Heart right ventricle (tissue), 16 donors: ENCODE measurements at regions of chr18 and their contacts with region 1.

Region 1: GRCh38 chr18:59470561-59471121 is 111.6 kb upstream of the LMAN1 start:
- DNase-seq: peak; percentile 58 to 71
- ATAC-seq: peak; percentile 61 to 90 (median 82)
- H3K4me3 ChIP-seq: no peak overlapping the region
- H3K27ac ChIP-seq: peak overlapping the region; percentile 29 to 87 (median 81)
- H3K4me1 ChIP-seq: peaks cover 0 to 30% (median 0%) of the 10 kb centered on the region in 9 donors
- H3K27me3 ChIP-seq: no peaks in the 10 kb centered on the region
- CTCF ChIP-seq: no peak

Region 2: DNA sequence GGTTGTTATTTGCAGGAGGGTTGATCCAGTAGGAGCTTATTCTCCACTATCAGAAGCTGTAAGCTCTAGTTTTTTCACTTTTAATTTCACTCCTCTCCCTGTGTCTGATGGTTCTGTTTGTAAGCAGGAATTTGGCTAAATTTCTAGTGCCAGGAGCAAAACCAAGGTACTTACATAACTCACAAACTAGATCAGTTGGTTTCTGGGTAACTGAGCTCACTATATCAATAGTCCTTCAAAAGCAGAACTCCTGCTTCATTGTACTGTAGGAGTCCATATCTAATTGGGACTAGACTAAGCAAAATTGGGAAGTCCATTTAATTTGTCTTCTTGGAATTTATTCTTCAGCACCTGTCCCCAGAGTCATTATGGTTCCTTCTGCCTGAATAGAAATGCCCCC is 177.3 kb before region 1 on chr18:
- intact Hi-C with region 1: no loop called
- DNase-seq: no peak
- ATAC-seq: no peak
- H3K4me3 ChIP-seq: no peak overlapping the region
- H3K27ac ChIP-seq: no peak overlapping the region
- H3K4me1 ChIP-seq: no peaks in the 10 kb centered on the region
- H3K27me3 ChIP-seq: peaks cover 0 to 45% (median 37%) of the 10 kb centered on the region in 7 donors
- CTCF ChIP-seq: no peak

Region 3: GRCh38 chr18:59502274-59503175 is 31.9 kb after region 1 on chr18:
- intact Hi-C with region 1: loop called in 1 of 10 experiments (anchors 1 kb)
- DNase-seq: peak in 1 of 2 donors; percentile 65
- ATAC-seq: peak; percentile 87 to 95 (median 90)
- H3K4me3 ChIP-seq: no peak overlapping the region
- H3K27ac ChIP-seq: peak overlapping the region; percentile 30 to 86 (median 78)
- H3K4me1 ChIP-seq: peaks cover 3 to 39% (median 20%) of the 10 kb centered on the region in 9 donors
- H3K27me3 ChIP-seq: no peaks in the 10 kb centered on the region
- CTCF ChIP-seq: no peak

Region 4: DNA sequence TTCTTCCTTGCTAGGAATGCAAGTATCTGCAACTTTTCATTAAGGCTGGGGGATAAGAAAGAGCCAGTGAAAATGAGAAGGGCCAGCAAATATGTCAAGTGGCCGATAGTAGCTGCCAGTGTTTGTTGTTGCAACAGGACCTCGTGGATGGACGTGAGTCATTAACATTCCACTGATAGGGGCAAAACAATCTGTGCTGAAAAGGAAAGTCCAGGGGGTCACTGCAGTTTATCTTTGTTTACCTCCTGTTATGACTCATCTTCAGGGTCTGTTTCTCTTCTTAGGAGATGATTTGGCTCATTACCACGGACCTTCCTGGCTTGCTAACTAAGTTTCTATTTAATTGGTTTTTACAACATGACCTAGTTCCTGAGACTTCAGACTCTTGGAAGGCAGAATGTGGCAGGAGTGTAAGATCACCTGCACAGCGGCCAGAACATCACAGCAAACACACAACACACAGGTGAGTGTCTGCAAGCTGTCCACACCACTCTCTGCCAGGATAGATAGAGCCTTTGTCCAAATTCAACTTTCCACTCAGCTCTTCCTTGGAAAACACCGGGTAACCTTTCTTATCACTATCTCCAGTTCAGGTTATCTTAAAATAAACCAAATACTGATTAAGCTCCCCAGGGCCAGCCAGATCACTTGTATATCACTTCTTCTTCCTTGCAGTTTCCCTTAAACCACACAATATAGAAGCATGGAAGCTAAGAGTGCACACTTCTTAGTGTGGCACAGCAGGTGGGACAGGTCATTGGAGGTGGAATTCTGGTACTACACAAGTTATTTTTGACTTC is 45.9 kb after region 1 on chr18:
- intact Hi-C with region 1: loop called in 4 of 10 experiments (anchors 1 to 5 kb)
- DNase-seq: peak in 1 of 2 donors; percentile 70
- ATAC-seq: peak; percentile 64 to 91 (median 88)
- H3K4me3 ChIP-seq: no peak overlapping the region
- H3K27ac ChIP-seq: peak overlapping the region in 8 of 10 donors; percentile 18 to 81 (median 70)
- H3K4me1 ChIP-seq: peaks cover 9 to 49% (median 34%) of the 10 kb centered on the region in 9 donors
- H3K27me3 ChIP-seq: no peaks in the 10 kb centered on the region
- CTCF ChIP-seq: no peak

Region 5: DNA sequence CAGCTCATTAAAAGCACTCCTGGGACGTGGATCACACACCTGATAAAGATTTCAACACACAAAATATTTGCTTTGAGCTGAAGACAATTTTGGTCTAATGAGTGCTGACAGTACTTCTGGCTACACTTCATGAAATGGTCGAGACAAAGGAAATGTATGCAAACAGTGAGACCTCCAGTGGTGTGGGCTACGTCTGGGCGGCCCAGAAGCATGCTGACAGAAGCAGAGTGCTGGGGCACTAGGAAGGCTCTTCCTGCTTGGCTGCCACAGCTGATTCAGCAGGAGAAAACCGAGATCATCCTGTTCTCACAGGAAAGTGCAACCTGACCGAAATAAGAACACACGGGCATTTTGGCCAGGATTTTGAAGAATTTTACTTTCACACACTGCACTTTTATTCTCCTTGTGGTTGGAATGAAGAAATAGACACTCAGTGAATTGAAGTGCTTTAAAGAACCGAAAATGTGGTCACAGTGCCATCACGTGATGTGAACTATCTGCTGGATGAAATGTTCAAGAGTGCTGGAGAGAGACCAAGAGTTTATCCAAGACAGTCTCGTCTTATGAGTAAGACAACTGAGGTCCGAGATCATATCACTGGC is 77.0 kb after region 1 on chr18:
- intact Hi-C with region 1: loop called in 1 of 10 experiments (anchors 5 kb)
- DNase-seq: no peak
- ATAC-seq: peak in 3 of 8 donors; percentile 32 to 61 (median 50)
- H3K4me3 ChIP-seq: no peak overlapping the region
- H3K27ac ChIP-seq: peak overlapping the region in 1 of 10 donors; percentile 10
- H3K4me1 ChIP-seq: peaks cover 0 to 18% (median 9%) of the 10 kb centered on the region in 9 donors
- H3K27me3 ChIP-seq: no peaks in the 10 kb centered on the region
- CTCF ChIP-seq: no peak